ENCODE measurements at regions of chr1 and their contacts with region 1.

Region 1: GRCh38 chr1:211680752-211681327 is 5.4 kb upstream of the NEK2 start:
- DNase-seq: peak; percentile 54 to 93 (median 68)
- ATAC-seq: peak; percentile 90
- H3K4me3 ChIP-seq: no peak overlapping the region
- H3K4me3 Mint-ChIP-seq: no peak overlapping the region
- H3K27ac ChIP-seq: peak overlapping the region; percentile 51 to 66
- H3K27ac Mint-ChIP-seq: peak overlapping the region; percentile 81
- H3K4me1 ChIP-seq: peaks cover 9% of the 10 kb centered on the region
- H3K4me1 Mint-ChIP-seq: peaks cover 11% of the 10 kb centered on the region
- H3K27me3 ChIP-seq: no peaks in the 10 kb centered on the region
- H3K27me3 Mint-ChIP-seq: no peaks in the 10 kb centered on the region
- CTCF ChIP-seq: peak; percentile 84

Region 2: DNA sequence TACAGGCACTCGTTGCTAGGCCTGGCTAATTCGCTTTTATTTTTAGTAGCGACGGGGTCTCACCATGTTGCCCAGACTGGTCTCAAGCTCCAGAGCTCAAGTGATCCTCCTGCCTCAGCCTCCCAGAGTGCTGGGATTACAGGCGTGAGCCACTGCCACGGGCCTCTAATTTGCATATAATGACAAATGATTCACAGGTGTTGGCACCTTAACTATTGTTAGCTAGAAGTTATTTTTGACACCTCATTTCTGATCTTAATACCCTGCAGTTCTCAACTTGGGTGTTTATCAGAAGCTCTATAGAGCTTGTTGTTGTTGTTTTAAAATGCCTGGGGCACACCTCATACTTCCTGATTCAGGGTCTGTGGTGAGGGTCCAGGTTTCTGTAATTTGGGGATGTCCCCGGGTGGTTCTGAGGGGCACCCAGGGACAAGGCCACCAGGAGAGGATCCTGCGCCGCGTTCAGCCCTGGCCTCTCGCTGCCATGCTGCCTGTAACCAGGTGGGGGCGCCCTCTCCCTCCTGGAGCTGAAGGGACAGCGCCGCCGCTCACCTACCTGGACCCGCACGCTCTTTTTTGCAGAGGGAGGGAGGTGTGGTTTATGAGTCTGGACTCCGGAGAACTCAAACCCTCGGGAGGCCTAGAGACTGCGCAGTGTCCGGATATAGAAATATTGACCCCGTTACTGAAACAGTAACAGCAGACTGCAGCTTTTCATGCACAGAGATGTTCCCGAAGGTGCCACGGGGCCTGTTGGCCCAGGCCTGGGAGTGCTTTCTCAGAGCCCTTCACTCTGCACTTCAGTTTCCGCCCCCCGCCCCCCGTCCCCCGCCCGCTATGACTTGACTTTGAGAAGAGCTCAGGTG is 17.6 kb after region 1 on chr1:
- CTCF ChIA-PET with region 1: interaction called, 24 read pairs
- POLR2A ChIA-PET with region 1: interaction called, 6 read pairs
- intact Hi-C with region 1: no loop called
- DNase-seq: peak; percentile 64 to 85 (median 79)
- ATAC-seq: peak; percentile 98
- H3K4me3 ChIP-seq: peak overlapping the region; percentile 35
- H3K4me3 Mint-ChIP-seq: no peak overlapping the region
- H3K27ac ChIP-seq: no peak overlapping the region
- H3K27ac Mint-ChIP-seq: no peak overlapping the region
- H3K4me1 ChIP-seq: peaks cover 29% of the 10 kb centered on the region
- H3K4me1 Mint-ChIP-seq: peaks cover 16% of the 10 kb centered on the region
- H3K27me3 ChIP-seq: no peaks in the 10 kb centered on the region
- H3K27me3 Mint-ChIP-seq: no peaks in the 10 kb centered on the region
- CTCF ChIP-seq: peak; percentile 78

Region 3: DNA sequence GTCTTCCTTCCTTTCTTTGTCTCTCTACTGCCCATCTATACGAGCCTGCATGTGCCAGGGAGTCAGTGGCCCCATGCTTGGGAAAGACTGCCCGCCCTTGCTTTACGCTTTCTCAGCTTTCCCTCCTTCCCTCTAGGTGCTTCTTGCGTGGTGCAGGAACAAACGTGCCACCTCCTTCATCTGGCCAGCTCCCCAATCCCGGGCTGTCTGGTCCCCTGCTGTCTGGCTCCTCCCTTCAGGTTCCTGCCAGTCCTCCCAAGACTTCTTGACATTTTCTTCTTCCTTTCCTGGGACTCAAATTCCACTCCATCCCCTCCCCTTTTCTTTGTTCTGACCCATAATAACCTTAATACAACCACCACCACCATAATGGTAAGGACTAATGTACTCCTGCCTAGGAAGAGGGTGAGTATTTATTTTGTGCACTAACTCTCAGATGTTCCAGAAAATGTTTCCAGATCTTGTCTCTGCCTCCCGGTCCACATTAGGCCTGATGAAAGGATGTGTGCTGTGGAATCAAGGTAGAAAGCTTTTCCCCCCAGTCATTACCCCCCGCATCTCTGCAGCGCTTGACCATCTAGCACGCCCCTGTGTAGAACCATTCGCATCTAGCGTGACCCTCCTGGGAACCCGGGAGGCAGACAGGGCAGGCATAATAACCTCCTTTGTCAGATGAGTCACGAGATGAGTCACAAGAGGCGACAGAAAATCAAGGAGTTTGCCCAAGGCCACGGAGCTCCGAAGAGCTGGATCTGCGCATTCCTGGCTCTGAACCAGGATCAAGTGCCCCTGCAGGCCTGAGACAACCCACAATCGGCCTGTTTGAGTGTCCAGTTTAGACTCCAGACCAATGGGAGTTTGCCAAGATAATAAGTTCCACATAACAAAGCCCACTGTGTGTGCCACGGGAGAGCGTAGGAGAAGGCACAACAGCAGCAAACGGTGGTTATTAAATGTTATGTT is 54.6 kb after region 1 on chr1:
- CTCF ChIA-PET with region 1: no interaction called
- POLR2A ChIA-PET with region 1: no interaction called
- intact Hi-C with region 1: no loop called
- DNase-seq: no peak
- ATAC-seq: no peak
- H3K4me3 ChIP-seq: no peak overlapping the region
- H3K4me3 Mint-ChIP-seq: no peak overlapping the region
- H3K27ac ChIP-seq: no peak overlapping the region
- H3K27ac Mint-ChIP-seq: no peak overlapping the region
- H3K4me1 ChIP-seq: peaks cover 36% of the 10 kb centered on the region
- H3K4me1 Mint-ChIP-seq: peaks cover 31% of the 10 kb centered on the region
- H3K27me3 ChIP-seq: no peaks in the 10 kb centered on the region
- H3K27me3 Mint-ChIP-seq: no peaks in the 10 kb centered on the region
- CTCF ChIP-seq: no peak

Region 4: DNA sequence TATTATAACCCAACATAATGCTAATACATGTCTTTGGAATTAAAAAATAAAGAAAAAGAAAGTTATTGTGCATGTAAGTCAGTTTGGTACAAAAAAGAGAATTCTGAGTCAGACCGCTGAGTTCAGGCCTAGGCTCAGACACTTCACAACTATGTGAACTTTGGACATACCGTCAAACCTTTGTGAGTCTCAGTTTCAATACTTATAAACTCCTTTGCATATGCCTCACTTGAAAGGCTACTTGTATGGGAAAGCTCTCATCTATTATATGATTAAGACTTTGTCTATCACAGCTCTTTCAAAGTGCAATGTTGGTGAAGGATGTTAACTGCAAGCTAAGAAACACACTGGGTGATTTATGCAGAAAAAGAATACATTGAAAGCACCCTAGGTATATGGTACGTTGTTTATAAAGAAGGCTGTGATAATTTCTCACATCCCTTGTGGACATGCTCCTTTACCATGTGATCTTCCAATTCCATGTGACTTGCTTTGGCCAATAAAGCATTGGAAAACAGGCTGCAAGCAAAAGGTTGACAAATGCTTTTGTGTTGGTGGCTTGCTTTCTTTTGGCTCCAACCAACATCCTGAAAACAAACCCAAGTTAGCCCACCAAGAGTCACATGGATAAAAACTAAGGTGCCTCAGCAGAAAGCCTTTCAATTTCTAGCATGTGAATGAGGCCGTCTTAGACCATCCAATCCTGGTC is 304.9 kb after region 1 on chr1:
- CTCF ChIA-PET with region 1: no interaction called
- POLR2A ChIA-PET with region 1: no interaction called
- intact Hi-C with region 1: loop called in 1 of 2 experiments (anchors 5 kb)
- DNase-seq: no peak
- ATAC-seq: no peak
- H3K4me3 ChIP-seq: no peak overlapping the region
- H3K4me3 Mint-ChIP-seq: no peak overlapping the region
- H3K27ac ChIP-seq: no peak overlapping the region
- H3K27ac Mint-ChIP-seq: no peak overlapping the region
- H3K4me1 ChIP-seq: no peaks in the 10 kb centered on the region
- H3K4me1 Mint-ChIP-seq: no peaks in the 10 kb centered on the region
- H3K27me3 ChIP-seq: no peaks in the 10 kb centered on the region
- H3K27me3 Mint-ChIP-seq: no peaks in the 10 kb centered on the region
- CTCF ChIP-seq: no peak

Region 5: GRCh38 chr1:212035123-212035834 is 354.4 kb after region 1 on chr1 and contains the starts of genes DTL and INTS7:
- CTCF ChIA-PET with region 1: interaction called, 21 read pairs
- POLR2A ChIA-PET with region 1: interaction called, 21 read pairs
- intact Hi-C with region 1: loop called (anchors 1 to 5 kb)
- DNase-seq: peak; percentile 94 to 100 (median 98)
- ATAC-seq: peak; percentile 88
- H3K4me3 ChIP-seq: peak within 1 kb of the TSS; percentile 83
- H3K4me3 Mint-ChIP-seq: peak within 1 kb of the TSS; percentile 95
- H3K27ac ChIP-seq: peak within 1 kb of the TSS; percentile 55 to 77
- H3K27ac Mint-ChIP-seq: peak within 1 kb of the TSS; percentile 95
- H3K4me1 ChIP-seq: peaks cover 16% of the 10 kb centered on the region
- H3K4me1 Mint-ChIP-seq: peaks cover 66% of the 10 kb centered on the region
- H3K27me3 ChIP-seq: no peaks in the 10 kb centered on the region
- H3K27me3 Mint-ChIP-seq: no peaks in the 10 kb centered on the region
- CTCF ChIP-seq: peak; percentile 99
- total RNA-seq, gene DTL: 0.49 to 0.64 TPM
- total RNA-seq, gene INTS7: 2.9 to 3.2 TPM

Region 6: DNA sequence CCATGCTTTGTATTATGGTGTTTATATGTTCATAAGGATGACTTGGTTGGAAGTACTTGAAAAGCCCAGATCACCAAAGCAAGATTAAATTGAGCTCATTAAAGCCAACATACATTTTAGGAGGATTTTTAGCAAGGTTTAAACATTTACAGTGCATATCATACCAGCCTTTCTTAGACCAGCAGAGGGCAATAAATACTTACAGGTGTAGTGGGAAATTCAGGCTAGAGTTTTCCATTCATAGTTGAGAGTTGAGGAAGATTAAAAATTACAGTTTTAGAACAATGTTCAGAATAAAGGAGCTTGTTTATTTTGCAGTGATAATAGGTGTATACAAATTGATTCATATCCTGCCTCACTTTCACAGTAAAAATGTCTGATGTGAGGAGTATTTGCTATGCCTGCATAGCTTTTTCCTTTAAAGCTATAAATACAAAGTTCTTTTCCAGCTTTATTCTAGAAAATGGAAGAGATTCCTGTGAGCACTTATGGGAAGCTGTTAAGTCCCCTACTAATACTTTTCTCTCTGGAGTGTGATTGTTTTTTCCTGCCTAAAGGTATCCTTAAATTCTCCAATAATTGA is 390.0 kb after region 1 on chr1:
- CTCF ChIA-PET with region 1: interaction called, 3 read pairs
- POLR2A ChIA-PET with region 1: no interaction called
- intact Hi-C with region 1: loop called in 1 of 2 experiments (anchors 5 kb)
- DNase-seq: peak in 3 of 14 experiments; percentile 68 to 71 (median 70)
- ATAC-seq: peak; percentile 62
- H3K4me3 ChIP-seq: no peak overlapping the region
- H3K4me3 Mint-ChIP-seq: no peak overlapping the region
- H3K27ac ChIP-seq: no peak overlapping the region
- H3K27ac Mint-ChIP-seq: no peak overlapping the region
- H3K4me1 ChIP-seq: no peaks in the 10 kb centered on the region
- H3K4me1 Mint-ChIP-seq: no peaks in the 10 kb centered on the region
- H3K27me3 ChIP-seq: no peaks in the 10 kb centered on the region
- H3K27me3 Mint-ChIP-seq: no peaks in the 10 kb centered on the region
- CTCF ChIP-seq: peak; percentile 76